ENCODE measurements at regions of chr17 and their contacts with region 1.

Region 1: GRCh38 chr17:40410082-40410481 is 7.6 kb downstream of the TOP2A start:
- DNase-seq: no peak
- ATAC-seq: no peak
- H3K4me3 ChIP-seq: no peak overlapping the region
- H3K27ac ChIP-seq: no peak overlapping the region
- H3K4me1 ChIP-seq: no peaks in the 10 kb centered on the region
- H3K27me3 ChIP-seq: no peaks in the 10 kb centered on the region
- CTCF ChIP-seq: no peak
- EP300 ChIP-seq: no peak
- POLR2A ChIP-seq: no peak
- RAD21 ChIP-seq: no peak

Region 2: GRCh38 chr17:40387680-40388079 is 22.4 kb before region 1 on chr17:
- CTCF ChIA-PET with region 1: interaction called, 14 read pairs
- POLR2A ChIA-PET with region 1: interaction called, 6 read pairs
- RAD21 ChIA-PET with region 1: no interaction called
- SMC1A ChIA-PET with region 1: interaction called, 11 read pairs
- in situ Hi-C with region 1: no loop called
- intact Hi-C with region 1: no loop called
- DNase-seq: no peak
- ATAC-seq: no peak
- H3K4me3 ChIP-seq: no peak overlapping the region
- H3K27ac ChIP-seq: no peak overlapping the region
- H3K4me1 ChIP-seq: no peaks in the 10 kb centered on the region
- H3K27me3 ChIP-seq: no peaks in the 10 kb centered on the region
- CTCF ChIP-seq: no peak
- EP300 ChIP-seq: no peak
- POLR2A ChIP-seq: no peak
- RAD21 ChIP-seq: no peak

Region 3: GRCh38 chr17:40399185-40399584 is 10.9 kb before region 1 on chr17:
- CTCF ChIA-PET with region 1: interaction called, 10 read pairs
- POLR2A ChIA-PET with region 1: interaction called, 4 read pairs
- RAD21 ChIA-PET with region 1: no interaction called
- SMC1A ChIA-PET with region 1: interaction called, 49 read pairs
- in situ Hi-C with region 1: no loop called
- intact Hi-C with region 1: no loop called
- DNase-seq: no peak
- ATAC-seq: peak; percentile 68
- H3K4me3 ChIP-seq: no peak overlapping the region
- H3K27ac ChIP-seq: no peak overlapping the region
- H3K4me1 ChIP-seq: no peaks in the 10 kb centered on the region
- H3K27me3 ChIP-seq: no peaks in the 10 kb centered on the region
- CTCF ChIP-seq: peak; percentile 21 to 51 (median 44); a peak in 4 of 6 replicates
- EP300 ChIP-seq: no peak
- POLR2A ChIP-seq: no peak
- RAD21 ChIP-seq: peak; percentile 54; the same call in 1 of the 2 replicates

Region 4: DNA sequence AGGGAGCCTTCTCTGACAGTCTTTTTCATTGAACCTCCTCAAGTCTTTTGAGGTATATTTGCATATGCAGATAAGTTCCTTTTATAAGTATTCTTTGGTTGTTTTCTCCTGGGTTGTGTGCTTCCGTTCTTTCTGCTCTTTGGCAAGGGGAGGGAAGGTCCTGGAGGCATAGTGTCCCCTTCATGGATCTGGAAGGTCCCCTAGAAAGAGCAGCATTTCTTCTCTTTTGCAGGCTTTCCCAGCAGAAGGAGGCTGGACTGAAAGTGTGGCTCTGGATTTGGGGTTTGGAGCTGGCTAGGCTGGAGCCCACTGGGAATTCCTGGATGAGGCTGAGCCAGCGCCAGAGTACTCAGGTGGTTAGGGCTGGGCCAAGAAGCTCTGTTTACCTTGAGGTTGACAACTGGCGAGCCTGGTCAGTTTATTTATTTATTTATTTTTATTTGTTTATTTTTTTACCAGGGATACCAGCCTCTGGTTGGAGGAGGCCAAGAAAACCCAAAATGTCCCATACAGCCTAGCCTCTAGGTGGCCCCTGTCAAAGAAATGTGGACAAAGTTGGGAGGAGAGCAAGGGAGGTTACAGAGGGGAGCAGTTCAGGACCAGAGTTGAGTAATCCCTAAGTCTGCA is 13.0 kb after region 1 on chr17:
- CTCF ChIA-PET with region 1: interaction called, 4 read pairs
- POLR2A ChIA-PET with region 1: interaction called, 5 read pairs
- RAD21 ChIA-PET with region 1: interaction called, 6 read pairs
- SMC1A ChIA-PET with region 1: interaction called, 12 read pairs
- in situ Hi-C with region 1: no loop called
- intact Hi-C with region 1: no loop called
- DNase-seq: no peak
- ATAC-seq: no peak
- H3K4me3 ChIP-seq: no peak overlapping the region
- H3K27ac ChIP-seq: no peak overlapping the region
- H3K4me1 ChIP-seq: peaks cover 2% of the 10 kb centered on the region; the same call in 1 of the 2 replicates
- H3K27me3 ChIP-seq: no peaks in the 10 kb centered on the region; a peak in 1 of 4 replicates
- CTCF ChIP-seq: no peak; a peak in 1 of 6 replicates
- EP300 ChIP-seq: no peak
- POLR2A ChIP-seq: no peak
- RAD21 ChIP-seq: no peak

Measured in GM12878 (cell line).